Naive thymus-derived CD4-positive, alpha-beta T cell (primary cell): ENCODE measurements at regions of chr9 and their contacts with region 1.

Region 1: GRCh38 chr9:124868511-124869465 is 6.9 kb downstream of the ARPC5L start:
- DNase-seq: peak; percentile 84 to 99 (median 91)
- ATAC-seq: peak; percentile 89
- H3K4me3 ChIP-seq: peak overlapping the region; percentile 95
- H3K4me3 Mint-ChIP-seq: peak overlapping the region; percentile 87 to 96 (median 93)
- H3K27ac ChIP-seq: peak overlapping the region; percentile 87
- H3K27ac Mint-ChIP-seq: peak overlapping the region; percentile 82 to 98 (median 89)
- H3K4me1 ChIP-seq: peaks cover 29 to 39% of the 10 kb centered on the region in 2 donors
- H3K4me1 Mint-ChIP-seq: peaks cover 20 to 55% (median 47%) of the 10 kb centered on the region in 7 donors
- H3K27me3 ChIP-seq: no peaks in the 10 kb centered on the region
- H3K27me3 Mint-ChIP-seq: no peaks in the 10 kb centered on the region

Region 2: DNA sequence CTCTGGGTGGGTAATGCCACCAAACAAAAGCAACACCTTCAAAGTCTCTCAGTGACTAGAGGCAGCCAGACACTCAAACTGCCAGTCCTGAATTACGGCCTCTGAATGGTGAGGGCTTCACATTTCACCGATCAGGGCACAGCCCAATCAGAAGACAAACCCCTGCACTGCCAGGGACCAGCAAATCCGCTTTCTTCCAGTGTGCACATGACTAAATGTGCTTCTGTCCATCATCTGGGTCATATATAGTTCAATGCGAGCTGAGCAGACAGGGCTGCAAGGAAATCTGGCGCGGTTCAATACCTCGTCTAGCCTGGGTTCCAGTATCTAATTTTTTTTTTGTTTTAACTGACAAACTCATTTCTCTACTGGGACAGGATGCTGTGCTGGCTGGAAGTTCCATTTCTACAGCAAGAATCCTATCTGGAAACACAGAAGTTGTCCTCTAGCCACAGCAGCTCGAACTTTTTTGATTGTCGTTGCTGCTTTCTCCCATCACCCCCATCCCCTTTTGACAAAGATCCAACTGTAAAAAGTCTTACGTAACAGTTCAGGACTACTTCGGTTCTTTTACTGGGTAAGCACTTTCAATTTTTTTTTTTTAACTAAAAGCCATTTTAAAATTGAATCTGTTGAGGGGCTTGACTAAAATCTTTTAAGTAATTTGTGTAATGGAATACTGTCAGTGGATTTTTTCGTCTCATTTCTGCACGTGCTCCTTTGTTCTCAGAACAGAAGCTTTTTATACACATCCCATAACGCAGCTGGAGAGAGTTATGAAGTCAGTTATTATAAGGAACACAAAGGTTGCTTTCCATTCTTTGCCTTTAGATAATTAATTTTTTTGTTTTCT is 210.4 kb before region 1 on chr9:
- CTCF ChIA-PET with region 1: no interaction called
- POLR2A ChIA-PET with region 1: no interaction called
- intact Hi-C with region 1: loop called in 1 of 2 experiments (anchors 5 kb)
- DNase-seq: peak in 7 of 9 donors; percentile 21 to 44 (median 34)
- ATAC-seq: peak; percentile 84
- H3K4me3 ChIP-seq: peak overlapping the region; percentile 71
- H3K4me3 Mint-ChIP-seq: peak overlapping the region; percentile 87 to 98 (median 94)
- H3K27ac ChIP-seq: peak overlapping the region; percentile 61
- H3K27ac Mint-ChIP-seq: peak overlapping the region in 8 of 9 donors; percentile 85 to 98 (median 89)
- H3K4me1 ChIP-seq: peaks cover 0 to 6% of the 10 kb centered on the region in 2 donors
- H3K4me1 Mint-ChIP-seq: peaks cover 23 to 61% (median 35%) of the 10 kb centered on the region in 7 donors
- H3K27me3 ChIP-seq: no peaks in the 10 kb centered on the region
- H3K27me3 Mint-ChIP-seq: peaks cover 0 to 18% (median 0%) of the 10 kb centered on the region in 5 donors

Region 3: DNA sequence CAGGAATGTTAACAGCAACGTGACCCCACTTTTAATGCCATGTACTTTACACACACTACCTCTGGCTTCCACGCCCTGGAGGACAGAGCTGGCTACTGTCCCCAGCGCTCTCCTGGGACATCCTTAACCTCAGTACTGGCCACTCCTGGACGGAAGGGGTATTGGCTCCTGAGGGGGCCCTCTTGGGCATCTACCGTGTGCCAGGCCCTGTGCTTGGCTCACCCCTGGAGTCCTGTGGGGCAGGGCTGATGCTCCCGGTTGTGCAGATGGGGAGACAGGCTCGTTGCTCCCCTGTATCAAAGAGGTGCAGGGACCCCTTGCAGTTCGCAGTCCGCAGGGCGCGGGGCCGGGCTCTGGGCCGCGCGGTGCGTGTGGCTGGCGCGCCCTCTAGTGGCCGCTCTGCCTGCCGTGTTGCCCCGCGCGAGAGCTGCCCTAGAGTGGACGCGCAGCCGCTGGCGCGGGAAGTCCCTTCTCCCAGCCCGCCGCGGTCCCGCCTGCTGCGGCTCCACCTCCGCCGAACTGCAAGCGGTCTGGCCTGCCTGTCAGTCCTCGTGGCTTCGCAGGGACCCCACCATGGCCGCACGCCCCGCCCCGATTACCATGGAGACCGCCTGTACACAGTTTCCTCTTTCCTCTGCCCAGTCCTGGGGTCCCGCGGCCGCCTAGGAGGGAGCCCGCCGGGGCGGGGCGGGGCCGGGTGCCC is 15.8 kb before region 1 on chr9 and contains the start of gene WDR38:
- CTCF ChIA-PET with region 1: interaction called, 3 read pairs
- POLR2A ChIA-PET with region 1: no interaction called
- intact Hi-C with region 1: loop called (anchors 1 kb)
- DNase-seq: peak; percentile 55 to 86 (median 76)
- ATAC-seq: peak; percentile 95
- H3K4me3 ChIP-seq: peak within 1 kb of the TSS; percentile 50
- H3K4me3 Mint-ChIP-seq: peak within 1 kb of the TSS in 9 of 10 donors; percentile 64 to 79 (median 68)
- H3K27ac ChIP-seq: peak within 1 kb of the TSS; percentile 46
- H3K27ac Mint-ChIP-seq: peak within 1 kb of the TSS in 3 of 9 donors; percentile 9 to 23 (median 19)
- H3K4me1 ChIP-seq: peaks cover 8% of the 10 kb centered on the region in 2 donors
- H3K4me1 Mint-ChIP-seq: peaks cover 4 to 14% (median 6%) of the 10 kb centered on the region in 7 donors
- H3K27me3 ChIP-seq: no peaks in the 10 kb centered on the region
- H3K27me3 Mint-ChIP-seq: peaks cover 5 to 16% (median 9%) of the 10 kb centered on the region in 5 donors
- total RNA-seq, gene WDR38: not detected

Region 4: DNA sequence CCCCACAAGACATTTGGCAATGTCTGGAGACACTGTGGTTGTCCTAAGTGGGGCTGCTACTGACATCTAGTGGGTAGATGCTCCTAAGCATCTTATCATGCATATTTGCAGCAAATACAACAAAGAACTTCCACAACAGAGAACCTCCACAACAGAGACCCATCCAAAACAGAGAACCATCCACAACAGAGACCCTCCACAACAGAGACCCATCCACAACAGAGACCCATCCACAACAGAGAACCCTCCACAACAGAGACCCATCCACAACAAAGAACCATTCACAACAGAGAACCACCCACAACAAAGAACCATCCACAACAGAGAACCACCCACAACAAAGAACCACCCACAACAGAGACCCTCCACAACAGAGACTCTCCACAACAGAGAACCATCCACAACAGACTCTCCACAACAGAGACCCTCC is 26.0 kb after region 1 on chr9:
- CTCF ChIA-PET with region 1: no interaction called
- POLR2A ChIA-PET with region 1: no interaction called
- intact Hi-C with region 1: loop called in 1 of 2 experiments (anchors 2 kb)
- DNase-seq: peak in 7 of 9 donors; percentile 68 to 80 (median 75)
- ATAC-seq: peak; percentile 87
- H3K4me3 ChIP-seq: no peak overlapping the region
- H3K4me3 Mint-ChIP-seq: peak overlapping the region in 6 of 10 donors; percentile 1 to 88 (median 66)
- H3K27ac ChIP-seq: peak overlapping the region; percentile 30
- H3K27ac Mint-ChIP-seq: peak overlapping the region; percentile 5 to 98 (median 89)
- H3K4me1 ChIP-seq: peaks cover 0 to 4% of the 10 kb centered on the region in 2 donors
- H3K4me1 Mint-ChIP-seq: peaks cover 7 to 23% (median 18%) of the 10 kb centered on the region in 7 donors
- H3K27me3 ChIP-seq: no peaks in the 10 kb centered on the region
- H3K27me3 Mint-ChIP-seq: peaks cover 0 to 9% (median 0%) of the 10 kb centered on the region in 5 donors

Region 5: DNA sequence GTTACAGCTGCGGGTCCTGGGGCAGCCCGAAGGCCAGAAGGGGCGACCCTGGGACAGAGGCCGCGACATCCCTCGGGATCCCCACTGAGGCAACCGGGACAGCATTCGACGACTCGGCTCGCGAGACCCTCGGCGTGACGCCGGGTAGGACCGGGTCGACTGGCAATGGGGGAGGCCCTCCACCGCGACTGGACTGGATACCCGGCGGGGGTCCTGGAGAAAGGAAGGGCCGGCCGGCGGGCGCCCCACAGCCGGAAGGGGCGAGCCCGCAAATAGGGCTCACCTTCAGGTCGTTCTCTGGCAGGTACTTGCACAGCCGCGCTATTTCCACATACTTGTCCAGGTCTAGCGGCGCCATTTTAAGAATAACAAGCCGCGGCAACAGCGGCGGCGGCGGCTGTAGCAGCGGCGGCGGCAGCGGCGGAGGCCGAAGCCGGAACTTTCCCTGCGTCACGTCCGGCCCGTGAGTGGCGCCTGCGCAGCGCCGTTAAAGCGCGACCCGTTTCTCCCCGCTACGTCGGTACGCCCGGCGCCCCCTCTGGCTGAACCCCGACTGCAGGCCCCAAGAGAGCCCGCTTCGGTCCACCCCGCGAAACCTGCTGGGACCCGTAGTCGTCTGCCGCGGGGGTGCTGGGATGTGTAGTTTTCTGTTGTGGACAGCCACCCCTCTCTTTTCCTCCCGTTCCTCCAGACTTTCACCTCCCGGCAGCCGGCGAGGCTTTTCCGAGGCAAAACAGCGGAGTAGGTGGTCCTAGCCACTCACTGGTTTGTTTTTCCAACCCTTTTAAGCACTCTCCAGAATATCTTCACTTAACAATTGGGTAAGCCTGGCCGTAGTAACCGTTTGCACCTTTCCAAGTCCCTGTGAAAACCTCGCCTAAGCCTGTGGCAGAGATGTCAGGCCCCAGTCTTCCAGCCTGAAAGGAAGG is 320.8 kb after region 1 on chr9 and contains the start of gene PPP6C:
- CTCF ChIA-PET with region 1: no interaction called
- POLR2A ChIA-PET with region 1: no interaction called
- intact Hi-C with region 1: loop called (anchors 1 to 2 kb)
- DNase-seq: peak; percentile 92 to 97 (median 96)
- ATAC-seq: peak; percentile 98
- H3K4me3 ChIP-seq: peak within 1 kb of the TSS; percentile 99
- H3K4me3 Mint-ChIP-seq: peak within 1 kb of the TSS; percentile 89 to 99 (median 96)
- H3K27ac ChIP-seq: peak within 1 kb of the TSS; percentile 98
- H3K27ac Mint-ChIP-seq: peak within 1 kb of the TSS; percentile 90 to 97 (median 95)
- H3K4me1 ChIP-seq: peaks cover 35 to 51% of the 10 kb centered on the region in 2 donors
- H3K4me1 Mint-ChIP-seq: peaks cover 35 to 79% (median 57%) of the 10 kb centered on the region in 7 donors
- H3K27me3 ChIP-seq: no peaks in the 10 kb centered on the region
- H3K27me3 Mint-ChIP-seq: peaks cover 0 to 4% (median 0%) of the 10 kb centered on the region in 5 donors
- total RNA-seq, gene PPP6C: 32.9 to 54.2 (median 49.5) TPM

Region 6: GRCh38 chr9:125374443-125375309 is 505.9 kb after region 1 on chr9:
- CTCF ChIA-PET with region 1: no interaction called
- POLR2A ChIA-PET with region 1: no interaction called
- intact Hi-C with region 1: loop called in 1 of 2 experiments (anchors 5 kb)
- DNase-seq: peak; percentile 37 to 74 (median 64)
- ATAC-seq: peak; percentile 86
- H3K4me3 ChIP-seq: peak overlapping the region; percentile 46
- H3K4me3 Mint-ChIP-seq: peak overlapping the region in 8 of 10 donors; percentile 36 to 76 (median 64)
- H3K27ac ChIP-seq: no peak overlapping the region
- H3K27ac Mint-ChIP-seq: peak overlapping the region in 1 of 9 donors; percentile 55
- H3K4me1 ChIP-seq: peaks cover 0 to 9% of the 10 kb centered on the region in 2 donors
- H3K4me1 Mint-ChIP-seq: peaks cover 5 to 10% (median 6%) of the 10 kb centered on the region in 7 donors
- H3K27me3 ChIP-seq: no peaks in the 10 kb centered on the region
- H3K27me3 Mint-ChIP-seq: peaks cover 0 to 8% (median 2%) of the 10 kb centered on the region in 5 donors